ENCODE measurements at regions of chr9 and their contacts with region 1.

Region 1: DNA sequence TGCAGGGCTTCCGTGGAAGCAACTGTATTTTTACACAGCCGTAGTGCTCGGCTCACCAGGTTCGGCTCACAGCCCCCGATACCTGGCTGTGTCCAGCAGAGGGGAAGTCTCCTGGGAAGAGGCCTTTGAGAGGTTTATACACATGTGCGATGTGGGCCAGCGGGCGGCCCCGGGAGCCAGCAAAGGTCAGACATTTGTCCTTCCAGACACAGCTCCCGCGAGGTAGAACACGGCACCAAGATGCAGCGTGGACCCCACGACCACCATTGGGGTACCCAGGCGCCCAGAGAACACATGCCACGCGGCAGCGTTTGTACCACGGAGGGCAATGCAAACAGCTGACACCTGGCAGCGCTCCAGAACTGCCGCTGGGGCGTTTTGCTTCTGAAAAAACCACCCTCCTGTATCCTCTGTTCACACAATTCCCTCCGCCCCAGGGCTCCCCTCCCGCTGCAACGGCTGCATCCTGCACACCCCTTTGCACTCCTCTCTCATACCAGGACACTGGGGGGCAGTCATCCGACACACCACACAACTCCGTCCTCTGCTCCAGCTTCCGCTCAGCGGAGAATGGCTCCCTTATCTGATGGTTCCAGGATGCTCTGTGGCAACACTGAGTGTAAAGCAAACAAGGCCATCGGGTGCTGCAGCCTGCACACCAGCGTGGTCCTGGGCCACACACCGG is 235.3 kb downstream of the SYK start:
- DNase-seq: peak; percentile 94
- H3K4me3 ChIP-seq: peak overlapping the region in 1 of 4 donors; percentile 14
- H3K27ac ChIP-seq: peak overlapping the region; percentile 15 to 67 (median 62)
- H3K4me1 ChIP-seq: peaks cover 17 to 25% (median 24%) of the 10 kb centered on the region in 4 donors
- H3K27me3 ChIP-seq: peaks cover 0 to 2% (median 0%) of the 10 kb centered on the region in 4 donors
- CTCF ChIP-seq: peak; percentile 55 to 65 (median 61)
- EP300 ChIP-seq: no peak
- POLR2A ChIP-seq: no peak

Region 2: GRCh38 chr9:90964101-90965020 is 72.6 kb before region 1 on chr9:
- intact Hi-C with region 1: no loop called
- DNase-seq: no peak
- H3K4me3 ChIP-seq: peak overlapping the region in 3 of 4 donors; percentile 22 to 29 (median 27)
- H3K27ac ChIP-seq: peak overlapping the region in 1 of 4 donors; percentile 24
- H3K4me1 ChIP-seq: peaks cover 0 to 9% (median 3%) of the 10 kb centered on the region in 4 donors
- H3K27me3 ChIP-seq: peaks cover 0 to 11% (median 0%) of the 10 kb centered on the region in 4 donors
- CTCF ChIP-seq: no peak
- EP300 ChIP-seq: no peak
- POLR2A ChIP-seq: no peak

Region 3: DNA sequence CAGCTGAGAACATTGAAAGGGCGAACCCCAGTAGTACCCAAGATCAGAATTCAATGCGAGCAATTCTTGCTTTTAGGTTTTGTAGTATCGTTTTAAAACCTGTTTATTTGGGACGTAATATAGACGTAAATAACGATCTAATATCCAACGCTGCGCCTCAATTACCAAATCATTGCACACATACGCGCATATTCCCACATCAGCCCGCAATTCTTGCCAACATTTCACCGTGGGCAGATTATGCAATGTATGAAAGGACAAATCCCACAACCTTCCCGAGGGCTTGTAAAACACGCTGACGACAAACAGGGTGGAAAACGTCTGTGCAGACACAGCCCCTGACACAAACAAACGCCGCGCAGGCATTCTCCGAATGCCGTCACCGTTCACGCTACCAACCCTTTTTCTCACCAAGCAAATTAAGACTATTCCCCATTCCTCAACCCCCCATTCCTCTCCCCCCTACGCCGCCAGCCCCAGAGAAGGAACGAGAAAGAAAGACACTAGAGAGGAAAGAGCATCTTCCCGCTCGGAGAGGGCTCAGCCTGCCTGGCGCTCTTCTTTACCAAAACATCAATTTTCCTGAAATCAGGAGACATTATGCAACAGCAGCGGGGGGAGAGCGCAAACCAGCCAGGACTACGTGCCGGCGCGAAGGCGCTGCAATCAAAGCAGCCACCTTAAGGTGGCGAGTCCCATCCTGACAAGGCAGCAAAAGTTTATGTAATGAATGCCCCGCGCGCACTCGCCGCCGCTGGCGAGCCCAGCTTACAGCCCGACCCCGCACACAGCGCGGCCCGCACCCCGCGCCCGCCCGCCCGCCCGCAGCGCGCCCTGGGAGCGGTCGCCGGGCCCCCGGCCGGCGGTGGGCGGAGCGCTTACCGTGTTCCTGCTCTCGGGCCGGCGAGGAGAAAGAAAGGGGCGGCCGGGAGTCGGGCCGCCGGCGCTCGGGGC is 386.1 kb after region 1 on chr9:
- intact Hi-C with region 1: loop called (anchors 5 kb)
- DNase-seq: peak; percentile 95
- H3K4me3 ChIP-seq: peak overlapping the region; percentile 61 to 90 (median 82)
- H3K27ac ChIP-seq: peak overlapping the region; percentile 91 to 99 (median 94)
- H3K4me1 ChIP-seq: peaks cover 15 to 59% (median 51%) of the 10 kb centered on the region in 4 donors
- H3K27me3 ChIP-seq: no peaks in the 10 kb centered on the region
- CTCF ChIP-seq: peak in 1 of 3 experiments; percentile 47
- EP300 ChIP-seq: peak; percentile 88
- POLR2A ChIP-seq: peak; percentile 42

Region 4: GRCh38 chr9:91445135-91445534 is 408.2 kb after region 1 on chr9:
- intact Hi-C with region 1: loop called (anchors 5 kb)
- DNase-seq: no peak
- H3K4me3 ChIP-seq: no peak overlapping the region
- H3K27ac ChIP-seq: no peak overlapping the region
- H3K4me1 ChIP-seq: no peaks in the 10 kb centered on the region
- H3K27me3 ChIP-seq: peaks cover 0 to 4% (median 0%) of the 10 kb centered on the region in 4 donors
- CTCF ChIP-seq: no peak
- EP300 ChIP-seq: no peak
- POLR2A ChIP-seq: no peak

Measured in esophagus muscularis mucosa (tissue), 4 donors.